Activated CD8-positive, alpha-beta memory T cell treated with anti-CD3 and anti-CD28 coated beads, Interleukin-2, amount 10 ng/mL, durations not matched to agents 7 days and 5 days (primary cell): ENCODE measurements at regions of chr13 and their contacts with region 1.

Region 1: DNA sequence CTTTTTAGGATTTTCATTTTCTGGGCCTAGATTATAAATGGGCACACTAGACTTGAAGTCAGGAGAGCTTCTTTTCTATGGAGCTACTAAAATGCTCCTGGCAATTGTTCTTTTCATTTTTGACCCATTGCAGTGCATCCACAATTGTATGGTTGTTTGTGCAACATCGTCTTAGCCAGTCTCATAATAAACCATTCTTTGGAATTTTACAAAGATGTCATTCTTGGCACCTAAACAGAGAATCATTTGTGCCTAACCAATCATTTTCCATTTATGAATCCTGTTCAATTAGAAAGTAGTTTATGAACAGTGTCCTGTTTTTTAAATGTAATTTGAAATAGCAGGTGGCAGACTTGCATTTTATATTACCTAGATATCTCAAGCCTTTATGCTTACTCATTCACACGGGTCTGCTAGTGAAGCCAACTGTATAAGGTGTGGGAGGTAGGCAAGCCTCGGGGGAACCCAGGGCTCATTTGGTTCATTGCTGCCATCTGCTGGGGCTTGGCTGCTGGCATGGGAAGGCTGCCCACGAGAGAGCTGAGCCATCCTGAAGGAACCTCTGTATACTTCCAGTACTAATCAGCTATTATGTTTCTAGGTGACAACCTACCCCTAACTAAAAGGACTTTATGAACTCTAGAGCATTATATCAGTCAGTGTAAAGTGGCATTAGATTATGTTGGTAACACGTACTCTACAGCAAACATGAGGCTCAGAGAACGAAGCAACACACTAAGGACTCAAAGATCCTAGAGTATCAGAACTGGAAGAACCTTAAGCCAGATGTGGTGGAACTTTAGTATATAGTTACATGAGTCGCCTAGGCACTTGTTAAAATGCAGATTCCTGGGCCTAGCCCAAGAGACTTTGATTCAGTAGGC is 60.0 kb downstream of the TPT1 start:
- DNase-seq: peak; percentile 60
- ATAC-seq: peak; percentile 69
- H3K4me3 Mint-ChIP-seq: no peak overlapping the region
- H3K27ac Mint-ChIP-seq: no peak overlapping the region
- H3K4me1 Mint-ChIP-seq: peaks cover 2% of the 10 kb centered on the region
- H3K27me3 Mint-ChIP-seq: no peaks in the 10 kb centered on the region

Region 2: DNA sequence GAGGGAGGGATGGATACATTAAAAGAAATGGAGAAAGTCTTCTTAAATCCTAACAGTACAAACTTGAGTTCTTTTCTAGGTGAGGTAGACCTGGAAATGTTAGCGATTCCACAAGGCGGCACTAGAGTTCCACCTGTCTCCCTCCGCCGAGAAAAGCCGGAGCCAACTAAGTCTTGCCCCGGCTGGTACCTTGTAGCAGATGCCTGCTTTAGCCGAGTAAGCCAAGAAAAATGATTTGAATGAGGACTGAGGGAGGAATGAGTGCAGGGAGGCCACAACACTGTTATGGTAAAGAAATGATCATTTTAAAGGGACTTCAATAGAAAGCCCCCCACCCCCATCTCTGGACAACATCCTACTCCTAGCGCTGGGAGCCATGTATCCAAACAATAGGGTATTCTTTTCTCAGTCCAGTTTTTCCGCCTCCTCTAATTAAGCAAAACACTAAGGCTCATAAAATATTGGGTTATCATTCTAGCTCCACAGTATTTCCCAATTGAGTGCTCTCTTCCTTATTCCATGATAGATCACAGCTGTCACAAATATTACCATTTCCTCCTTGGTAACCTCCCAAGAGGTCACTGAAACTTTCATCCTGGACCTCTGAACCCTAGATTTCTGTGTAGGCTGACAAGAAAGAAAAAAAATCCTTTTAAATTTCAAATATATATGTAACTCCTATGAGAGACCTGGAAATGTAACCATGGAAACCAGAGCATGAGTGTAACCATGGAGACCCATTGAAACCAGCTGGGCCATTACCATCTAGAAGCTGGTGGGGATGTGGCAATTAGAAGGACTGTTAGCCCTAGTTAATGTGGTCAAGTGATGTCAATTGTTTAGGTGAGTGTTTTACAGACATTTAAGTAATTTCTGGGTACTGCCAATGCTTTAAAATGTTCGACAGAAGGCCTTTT is 233.3 kb before region 1 on chr13:
- CTCF ChIA-PET with region 1: interaction called, 41 read pairs
- DNase-seq: peak; percentile 84
- ATAC-seq: peak; percentile 89
- H3K4me3 Mint-ChIP-seq: peak overlapping the region; percentile 70
- H3K27ac Mint-ChIP-seq: no peak overlapping the region
- H3K4me1 Mint-ChIP-seq: peaks cover 29% of the 10 kb centered on the region
- H3K27me3 Mint-ChIP-seq: peaks cover 61% of the 10 kb centered on the region